Activated CD4-positive, alpha-beta memory T cell treated with anti-CD3 and anti-CD28 coated beads for 36 hours (primary cell): ENCODE measurements at regions of chr1 and their contacts with region 1.

Region 1: GRCh38 chr1:37514350-37515184 is at the start of gene MEAF6:
- DNase-seq: peak; percentile 87
- H3K4me3 Mint-ChIP-seq: peak within 1 kb of the TSS; percentile 98
- H3K27ac Mint-ChIP-seq: peak within 1 kb of the TSS; percentile 94
- H3K4me1 Mint-ChIP-seq: peaks cover 49% of the 10 kb centered on the region
- H3K27me3 Mint-ChIP-seq: no peaks in the 10 kb centered on the region
- total RNA-seq, gene MEAF6: 89.6 to 89.7 TPM

Region 2: GRCh38 chr1:37474046-37474759 is 40.4 kb before region 1 on chr1 and contains the start of gene ZC3H12A:
- CTCF ChIA-PET with region 1: interaction called, 15 read pairs
- POLR2A ChIA-PET with region 1: interaction called, 27 read pairs
- intact Hi-C with region 1: loop called (anchors 1 kb)
- DNase-seq: peak; percentile 93
- H3K4me3 Mint-ChIP-seq: peak within 1 kb of the TSS; percentile 94
- H3K27ac Mint-ChIP-seq: peak within 1 kb of the TSS; percentile 100
- H3K4me1 Mint-ChIP-seq: peaks cover 37% of the 10 kb centered on the region
- H3K27me3 Mint-ChIP-seq: no peaks in the 10 kb centered on the region
- total RNA-seq, gene ZC3H12A: 39.0 to 40.8 TPM

Region 3: GRCh38 chr1:37498872-37499617 is 15.5 kb before region 1 on chr1:
- CTCF ChIA-PET with region 1: interaction called, 14 read pairs
- POLR2A ChIA-PET with region 1: interaction called, 7 read pairs
- intact Hi-C with region 1: no loop called
- DNase-seq: no peak
- H3K4me3 Mint-ChIP-seq: no peak overlapping the region
- H3K27ac Mint-ChIP-seq: no peak overlapping the region
- H3K4me1 Mint-ChIP-seq: peaks cover 19% of the 10 kb centered on the region
- H3K27me3 Mint-ChIP-seq: no peaks in the 10 kb centered on the region

Region 4: GRCh38 chr1:37553927-37554808 is 39.6 kb after region 1 on chr1 and contains the start of gene SNIP1:
- CTCF ChIA-PET with region 1: interaction called, 6 read pairs
- POLR2A ChIA-PET with region 1: interaction called, 8 read pairs
- intact Hi-C with region 1: loop called (anchors 5 kb)
- DNase-seq: peak; percentile 95
- H3K4me3 Mint-ChIP-seq: peak within 1 kb of the TSS; percentile 91
- H3K27ac Mint-ChIP-seq: peak within 1 kb of the TSS; percentile 93
- H3K4me1 Mint-ChIP-seq: peaks cover 45% of the 10 kb centered on the region
- H3K27me3 Mint-ChIP-seq: no peaks in the 10 kb centered on the region
- total RNA-seq, gene SNIP1: 18.1 to 19.0 TPM